Dorsolateral prefrontal cortex (tissue), 120 donors: ENCODE measurements at regions of chr7 and their contacts with region 1.

Region 1: DNA sequence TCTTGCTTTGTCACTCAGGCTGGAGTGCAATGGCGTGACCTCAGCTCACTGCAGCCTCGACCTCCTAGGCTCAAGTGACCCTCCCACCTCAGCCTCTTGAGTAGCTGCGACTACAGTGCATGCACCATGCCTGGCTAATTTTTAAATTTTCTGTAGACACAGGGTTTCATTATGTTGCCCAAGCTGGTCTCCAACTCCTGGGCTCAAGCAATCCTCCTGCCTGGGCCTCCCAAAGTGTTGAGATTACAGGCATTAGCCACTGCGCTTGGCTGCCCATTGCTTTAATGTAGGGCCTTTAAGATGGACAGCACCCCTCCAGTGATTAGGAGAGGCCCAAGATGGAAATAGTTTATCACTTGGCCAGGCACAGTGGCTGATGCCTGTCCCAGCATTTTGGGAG is 39.4 kb downstream of the NIPSNAP2 start:
- DNase-seq: no peak
- H3K4me3 ChIP-seq: no peak overlapping the region
- H3K27ac ChIP-seq: no peak overlapping the region
- H3K27me3 ChIP-seq: no peaks in the 10 kb centered on the region
- CTCF ChIP-seq: no peak

Region 2: DNA sequence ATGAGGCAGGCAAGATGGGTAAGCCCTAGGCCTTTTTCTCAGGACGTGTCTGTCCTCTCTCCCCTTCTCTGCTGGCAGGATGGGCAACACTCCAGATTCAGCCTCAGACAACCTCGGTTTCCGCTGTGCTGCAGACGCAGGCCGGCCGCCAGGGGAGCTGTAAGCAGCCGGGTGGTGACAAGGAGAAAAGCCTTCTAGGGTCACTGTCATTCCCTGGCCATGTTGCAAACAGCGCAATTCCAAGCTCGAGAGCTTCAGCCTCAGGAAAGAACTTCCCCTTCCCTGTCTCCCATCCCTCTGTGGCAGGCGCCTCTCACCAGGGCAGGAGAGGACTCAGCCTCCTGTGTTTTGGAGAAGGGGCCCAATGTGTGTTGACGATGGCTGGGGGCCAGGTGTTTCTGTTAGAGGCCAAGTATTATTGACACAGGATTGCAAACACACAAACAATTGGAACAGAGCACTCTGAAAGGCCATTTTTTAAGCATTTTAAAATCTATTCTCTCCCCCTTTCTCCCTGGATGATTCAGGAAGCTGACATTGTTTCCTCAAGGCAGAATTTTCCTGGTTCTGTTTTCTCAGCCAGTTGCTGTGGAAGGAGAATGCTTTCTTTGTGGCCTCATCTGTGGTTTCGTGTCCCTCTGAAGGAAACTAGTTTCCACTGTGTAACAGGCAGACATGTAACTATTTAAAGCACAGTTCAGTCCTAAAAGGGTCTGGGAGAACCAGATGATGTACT is 75.9 kb after region 1 on chr7:
- intact Hi-C with region 1: loop called in 1 of 2 experiments (anchors 5 kb)
- DNase-seq: peak; percentile 75 to 88 (median 82)
- H3K4me3 ChIP-seq: peak overlapping the region in 13 of 59 donors; percentile 6 to 35 (median 21)
- H3K27ac ChIP-seq: peak overlapping the region; percentile 37 to 94 (median 87)
- H3K27me3 ChIP-seq: no peaks in the 10 kb centered on the region
- CTCF ChIP-seq: peak; percentile 25 to 86 (median 74)